ENCODE measurements at regions of chr13 and their contacts with region 1.

Region 1: GRCh38 chr13:26698392-26699196 is 62.0 kb downstream of the GPR12 start:
- DNase-seq: peak; percentile 86
- ATAC-seq: peak; percentile 95
- H3K4me3 ChIP-seq: peak overlapping the region; percentile 65
- H3K27ac ChIP-seq: no peak overlapping the region
- H3K4me1 ChIP-seq: peaks cover 5% of the 10 kb centered on the region; the same call in 1 of the 2 replicates
- H3K27me3 ChIP-seq: peaks cover 16% of the 10 kb centered on the region
- CTCF ChIP-seq: peak; percentile 93

Region 2: GRCh38 chr13:26482451-26483197 is 216.0 kb before region 1 on chr13:
- CTCF ChIA-PET with region 1: no interaction called
- POLR2A ChIA-PET with region 1: no interaction called
- intact Hi-C with region 1: loop called (anchors 1 kb)
- DNase-seq: peak; percentile 82
- ATAC-seq: no peak
- H3K4me3 ChIP-seq: peak overlapping the region; percentile 50
- H3K27ac ChIP-seq: no peak overlapping the region
- H3K4me1 ChIP-seq: peaks cover 5% of the 10 kb centered on the region; the same call in 1 of the 2 replicates
- H3K27me3 ChIP-seq: no peaks in the 10 kb centered on the region
- CTCF ChIP-seq: peak; percentile 82

Region 3: DNA sequence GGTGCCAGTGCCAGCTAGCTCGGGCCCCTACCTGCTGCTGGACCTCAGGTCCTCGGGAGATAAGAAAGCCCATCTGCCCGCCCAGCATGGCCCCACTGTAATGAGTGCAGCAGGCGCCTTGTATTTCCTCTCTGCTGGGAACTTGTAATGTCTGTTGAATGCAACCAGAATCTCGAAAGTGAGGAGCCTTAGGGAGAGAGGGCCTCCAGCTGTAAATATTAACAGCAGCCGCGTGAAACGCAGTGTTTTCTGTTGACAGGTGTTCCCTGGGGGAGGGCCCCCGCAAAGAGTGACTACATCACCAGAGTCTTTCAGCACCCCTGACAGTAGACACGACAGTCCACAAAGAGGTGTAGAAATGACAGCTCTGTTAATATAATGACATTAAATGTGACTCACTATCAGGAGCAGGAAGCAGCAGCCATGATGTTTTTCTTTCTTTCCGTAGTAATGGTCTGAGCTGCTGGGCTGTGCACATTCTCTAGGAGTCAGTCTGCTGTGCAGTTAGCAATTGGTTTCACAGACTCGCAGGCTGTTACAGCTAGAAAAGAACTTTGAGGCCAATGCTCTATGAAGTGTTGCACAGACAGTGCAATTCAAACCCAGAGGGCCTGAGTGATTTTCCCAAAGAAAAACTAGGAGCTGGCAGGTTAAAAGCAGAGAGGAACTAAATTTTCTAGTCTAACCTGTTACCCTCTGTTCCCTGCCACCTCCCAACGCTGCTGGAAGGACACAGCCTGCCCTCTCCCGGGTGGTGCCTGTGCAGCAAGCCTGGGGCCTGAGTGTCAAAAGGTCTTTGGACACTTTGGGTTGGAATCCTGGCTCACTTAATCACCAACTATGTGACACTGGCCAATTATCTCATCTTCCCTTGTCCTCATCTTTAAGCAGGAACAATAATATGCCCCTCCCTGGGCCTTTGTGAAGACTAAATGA is 199.7 kb before region 1 on chr13:
- CTCF ChIA-PET with region 1: interaction called, 19 read pairs
- POLR2A ChIA-PET with region 1: no interaction called
- intact Hi-C with region 1: loop called (anchors 5 kb)
- DNase-seq: peak; percentile 28
- ATAC-seq: peak; percentile 53
- H3K4me3 ChIP-seq: no peak overlapping the region
- H3K27ac ChIP-seq: no peak overlapping the region
- H3K4me1 ChIP-seq: no peaks in the 10 kb centered on the region
- H3K27me3 ChIP-seq: no peaks in the 10 kb centered on the region; the same call in 1 of the 2 replicates
- CTCF ChIP-seq: peak; percentile 29; the same call in 1 of the 2 replicates

Region 4: GRCh38 chr13:26656919-26657318 is 41.7 kb before region 1 on chr13:
- CTCF ChIA-PET with region 1: interaction called, 7 read pairs
- POLR2A ChIA-PET with region 1: no interaction called
- intact Hi-C with region 1: loop called (anchors 1 kb)
- DNase-seq: peak; percentile 41
- ATAC-seq: peak; percentile 68
- H3K4me3 ChIP-seq: no peak overlapping the region
- H3K27ac ChIP-seq: no peak overlapping the region
- H3K4me1 ChIP-seq: no peaks in the 10 kb centered on the region
- H3K27me3 ChIP-seq: no peaks in the 10 kb centered on the region
- CTCF ChIP-seq: peak; percentile 45

Measured in PC-3 (cell line).